ENCODE measurements at regions of chr17 and their contacts with region 1.

Region 1: GRCh38 chr17:50841949-50842354 is 6.6 kb downstream of the WFIKKN2 start:
- DNase-seq: peak; percentile 64 to 80
- ATAC-seq: peak; percentile 51 to 68 (median 58)
- H3K4me3 ChIP-seq: no peak overlapping the region
- H3K27ac ChIP-seq: no peak overlapping the region
- H3K4me1 ChIP-seq: peaks cover 26% of the 10 kb centered on the region
- H3K27me3 ChIP-seq: no peaks in the 10 kb centered on the region
- CTCF ChIP-seq: peak; percentile 83

Region 2: DNA sequence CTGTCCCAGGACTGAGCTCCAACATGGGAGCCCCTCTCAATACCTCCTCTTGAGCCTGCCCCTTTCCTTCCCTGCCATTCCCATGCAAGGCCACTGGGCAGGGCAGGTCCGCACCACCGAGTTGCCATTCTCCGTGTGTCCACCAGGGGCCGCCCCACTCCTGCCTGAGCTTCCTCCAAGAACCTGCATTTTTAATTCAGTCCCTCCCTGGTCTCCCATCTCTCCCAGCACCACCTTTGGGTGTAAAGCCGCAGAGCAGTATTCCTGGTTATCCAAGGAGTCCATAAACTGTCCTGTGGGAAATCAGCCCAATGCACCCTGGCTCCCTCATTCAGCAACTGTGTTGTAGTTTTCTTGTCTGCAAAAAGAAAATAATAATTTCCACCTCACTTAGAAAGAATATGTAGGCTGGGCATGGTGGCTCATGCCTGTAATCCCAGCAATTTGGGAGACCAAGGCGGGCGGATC is 58.7 kb before region 1 on chr17:
- intact Hi-C with region 1: loop called (anchors 1 to 5 kb)
- DNase-seq: peak; percentile 82 to 91
- ATAC-seq: peak; percentile 93 to 96 (median 95)
- H3K4me3 ChIP-seq: no peak overlapping the region
- H3K27ac ChIP-seq: no peak overlapping the region
- H3K4me1 ChIP-seq: no peaks in the 10 kb centered on the region
- H3K27me3 ChIP-seq: no peaks in the 10 kb centered on the region
- CTCF ChIP-seq: peak; percentile 96

Region 3: DNA sequence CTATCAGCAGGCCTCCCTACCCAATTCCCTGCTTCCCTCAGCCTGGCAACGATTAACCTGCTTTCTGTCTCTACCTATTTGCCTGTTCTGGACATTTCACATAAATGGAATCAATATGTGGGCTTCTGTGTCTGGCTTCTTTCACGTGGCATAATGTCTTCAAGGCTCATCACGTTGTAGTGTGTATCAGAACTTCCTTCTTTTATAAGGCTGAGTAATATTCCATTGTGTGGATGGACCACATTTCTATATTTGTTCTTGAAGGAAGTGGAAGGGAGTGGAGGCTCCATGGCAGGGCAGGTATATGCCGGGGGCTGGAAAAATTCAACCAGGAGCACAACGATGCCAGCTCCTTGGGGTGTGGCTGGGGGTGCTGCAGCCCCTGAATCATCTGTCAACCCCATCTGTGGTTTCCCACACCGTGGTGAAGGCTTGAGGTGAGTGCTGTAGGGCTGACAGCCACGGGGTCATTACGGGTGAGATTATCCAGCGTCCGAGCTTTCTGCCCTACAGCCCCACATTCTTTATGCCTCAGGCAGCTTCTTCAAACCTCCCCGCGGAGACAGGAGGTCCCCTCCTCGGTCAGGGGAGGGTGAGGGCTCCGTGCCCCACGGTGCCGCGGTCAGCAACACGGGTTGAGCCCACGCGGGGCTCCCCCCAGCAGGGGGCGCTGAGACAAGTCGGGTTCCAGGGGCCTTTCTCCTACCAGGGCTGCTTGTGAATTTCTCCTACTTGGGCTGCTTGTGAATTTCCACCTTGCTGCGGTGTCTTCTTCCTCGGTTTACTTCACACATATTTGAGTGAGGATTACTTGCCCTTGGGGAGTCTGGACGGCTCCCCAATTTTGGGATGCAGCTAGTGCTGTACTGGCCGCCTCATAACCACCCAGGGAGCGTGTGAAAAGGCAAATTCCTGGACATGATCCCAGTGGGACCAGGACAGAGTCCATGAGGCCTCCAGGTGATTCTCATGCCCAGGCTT is 24.9 kb before region 1 on chr17:
- intact Hi-C with region 1: loop called (anchors 2 kb)
- DNase-seq: peak; percentile 55 to 79
- ATAC-seq: peak; percentile 81 to 91 (median 82)
- H3K4me3 ChIP-seq: peak overlapping the region; percentile 47
- H3K27ac ChIP-seq: no peak overlapping the region
- H3K4me1 ChIP-seq: no peaks in the 10 kb centered on the region
- H3K27me3 ChIP-seq: peaks cover 0 to 5% (median 0%) of the 10 kb centered on the region in 3 donors
- CTCF ChIP-seq: peak; percentile 80

Measured in psoas muscle (tissue), 8 donors.